CD4-positive, alpha-beta memory T cell (primary cell): ENCODE measurements at regions of chr22 and their contacts with region 1.

Region 1: DNA sequence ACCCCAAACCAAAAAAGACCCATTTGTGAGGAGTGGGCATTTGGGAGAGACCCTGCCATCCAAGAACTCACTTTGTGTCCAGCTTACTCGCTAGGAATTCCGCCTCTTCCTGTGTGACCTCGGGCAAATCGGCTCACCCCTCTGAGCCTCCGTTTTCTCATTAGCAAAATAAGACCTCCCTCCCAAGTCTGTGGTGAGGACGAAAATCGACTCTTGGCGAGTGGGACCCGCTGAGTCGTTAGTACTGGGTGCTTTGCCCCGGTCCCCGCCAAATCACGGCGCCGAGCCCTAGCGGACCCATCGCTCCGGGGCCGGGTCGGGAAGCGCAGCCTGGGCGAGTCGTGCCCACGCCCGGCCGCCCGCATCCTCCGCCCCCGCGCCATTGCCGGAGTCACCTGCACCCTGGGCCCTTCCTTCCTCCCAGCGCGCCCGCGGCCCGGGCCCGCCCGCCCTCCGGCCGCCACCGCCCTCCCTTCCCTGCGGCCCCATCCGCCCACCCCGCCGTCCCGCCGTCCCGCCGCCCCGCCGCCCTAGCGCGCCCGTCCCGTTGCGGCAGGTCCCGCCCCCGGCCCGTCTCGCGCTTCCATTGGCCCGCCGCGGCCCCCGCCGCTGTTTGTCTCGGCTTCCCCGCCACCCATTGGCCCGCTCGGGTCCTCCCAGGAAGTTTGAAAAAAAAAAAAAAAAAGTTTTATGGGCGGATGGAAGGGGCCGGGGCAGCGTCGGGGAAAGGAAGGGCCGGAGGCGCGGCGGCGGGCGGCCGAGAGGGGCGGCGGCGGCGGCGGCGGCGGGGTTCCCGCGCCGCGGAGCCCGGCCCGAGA is 48.9 kb downstream of the TRIOBP start:
- DNase-seq: peak; percentile 79 to 86 (median 82)
- H3K4me3 ChIP-seq: peak overlapping the region; percentile 45 to 62
- H3K4me3 Mint-ChIP-seq: peak overlapping the region; percentile 86 to 97 (median 94)
- H3K27ac ChIP-seq: peak overlapping the region; percentile 60
- H3K27ac Mint-ChIP-seq: peak overlapping the region; percentile 82 to 96 (median 92)
- H3K4me1 ChIP-seq: peaks cover 22% of the 10 kb centered on the region
- H3K4me1 Mint-ChIP-seq: peaks cover 6 to 31% (median 25%) of the 10 kb centered on the region in 4 donors
- H3K27me3 ChIP-seq: no peaks in the 10 kb centered on the region
- H3K27me3 Mint-ChIP-seq: no peaks in the 10 kb centered on the region

Region 2: DNA sequence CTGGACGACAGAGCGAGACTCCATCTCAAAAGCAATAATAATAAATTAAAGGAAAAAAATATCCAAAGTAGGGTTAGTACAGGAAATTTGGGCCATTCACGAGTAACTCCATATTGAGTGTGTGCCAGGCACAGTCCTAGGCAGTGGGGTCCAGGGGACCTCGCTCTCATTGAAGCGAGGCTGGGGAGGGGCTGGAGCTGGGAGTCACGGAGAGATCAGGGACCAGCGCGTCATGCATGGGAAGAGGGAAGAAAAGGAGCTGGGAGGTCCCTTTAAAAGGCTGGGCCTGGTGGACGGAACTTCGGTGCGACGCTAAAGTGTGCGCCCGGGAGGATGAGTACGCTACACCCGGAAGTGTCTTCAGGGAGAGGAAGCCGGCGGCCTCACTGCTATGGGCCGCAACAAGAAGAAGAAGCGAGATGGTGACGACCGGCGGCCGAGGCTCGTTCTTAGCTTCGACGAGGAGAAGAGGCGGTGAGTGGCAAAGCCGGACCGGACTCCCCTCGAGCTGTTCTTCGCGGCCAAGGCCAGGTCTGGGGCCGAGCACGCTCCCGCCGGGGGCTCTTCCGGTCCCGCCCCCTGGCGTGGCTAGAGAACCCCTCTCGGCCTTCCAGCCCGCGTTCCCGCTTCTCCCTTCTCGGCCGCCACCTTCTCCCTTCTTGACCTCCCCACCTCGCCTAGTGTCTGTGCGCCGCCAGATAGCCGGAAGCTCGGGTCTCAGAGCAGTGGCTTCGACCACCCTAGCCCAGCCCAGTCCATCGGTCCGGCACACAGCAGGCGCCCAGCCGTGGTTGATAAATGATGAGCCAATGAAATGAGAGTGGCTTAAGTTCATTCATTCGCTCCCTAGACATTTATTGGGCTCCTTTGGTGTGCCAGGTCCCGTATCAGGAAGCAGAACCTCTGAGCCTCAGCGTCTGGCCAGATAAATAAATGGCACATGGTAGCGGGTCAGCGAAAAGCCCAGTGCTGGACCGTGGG is 59.5 kb before region 1 on chr22 and contains the start of gene NOL12:
- CTCF ChIA-PET with region 1: no interaction called
- POLR2A ChIA-PET with region 1: no interaction called
- intact Hi-C with region 1: loop called (anchors 10 kb)
- DNase-seq: peak; percentile 76 to 82 (median 77)
- H3K4me3 ChIP-seq: peak within 1 kb of the TSS; percentile 79 to 96
- H3K4me3 Mint-ChIP-seq: peak within 1 kb of the TSS; percentile 91 to 98 (median 96)
- H3K27ac ChIP-seq: peak within 1 kb of the TSS; percentile 92
- H3K27ac Mint-ChIP-seq: peak within 1 kb of the TSS; percentile 91 to 98 (median 95)
- H3K4me1 ChIP-seq: peaks cover 25% of the 10 kb centered on the region
- H3K4me1 Mint-ChIP-seq: peaks cover 16 to 34% (median 25%) of the 10 kb centered on the region in 4 donors
- H3K27me3 ChIP-seq: no peaks in the 10 kb centered on the region
- H3K27me3 Mint-ChIP-seq: no peaks in the 10 kb centered on the region
- total RNA-seq, gene NOL12: 50.3 to 52.0 TPM

Region 3: DNA sequence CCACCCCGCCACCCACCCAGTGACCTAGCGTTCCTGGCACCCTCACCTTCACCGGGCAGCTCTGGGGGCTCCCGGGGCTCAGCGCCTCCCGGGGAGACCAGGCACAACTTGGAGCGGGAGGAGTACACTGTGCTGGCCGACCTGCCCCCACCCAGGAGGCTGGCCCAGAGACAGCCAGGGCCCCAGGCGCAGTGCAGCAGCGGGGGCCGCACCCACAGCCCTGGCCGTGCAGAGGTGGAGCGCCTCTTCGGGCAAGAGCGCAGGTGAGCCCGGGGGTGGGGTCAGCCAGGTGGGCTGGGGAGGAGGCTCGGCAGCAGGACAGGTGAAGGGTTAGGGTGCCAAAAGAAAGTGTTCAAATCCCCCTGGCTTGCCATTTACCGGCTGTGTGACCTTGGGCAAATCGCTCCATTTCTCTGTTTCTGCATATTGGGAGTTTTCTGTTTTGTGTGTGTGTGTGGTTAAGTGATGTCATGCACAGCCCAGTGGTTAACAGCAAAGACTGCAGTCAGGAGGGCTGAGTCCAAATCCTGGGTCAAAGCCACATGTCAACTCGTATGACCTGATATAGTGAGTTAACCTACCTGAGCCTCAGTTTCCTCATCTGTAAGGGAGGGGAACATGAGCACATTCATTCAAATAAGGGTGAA is 19.4 kb before region 1 on chr22:
- CTCF ChIA-PET with region 1: no interaction called
- POLR2A ChIA-PET with region 1: no interaction called
- intact Hi-C with region 1: no loop called
- DNase-seq: no peak
- H3K4me3 ChIP-seq: no peak overlapping the region
- H3K4me3 Mint-ChIP-seq: no peak overlapping the region
- H3K27ac ChIP-seq: no peak overlapping the region
- H3K27ac Mint-ChIP-seq: no peak overlapping the region
- H3K4me1 ChIP-seq: no peaks in the 10 kb centered on the region
- H3K4me1 Mint-ChIP-seq: no peaks in the 10 kb centered on the region
- H3K27me3 ChIP-seq: no peaks in the 10 kb centered on the region
- H3K27me3 Mint-ChIP-seq: no peaks in the 10 kb centered on the region

Region 4: GRCh38 chr22:37807410-37808293 is 61.9 kb after region 1 on chr22 and contains the start of gene GCAT:
- CTCF ChIA-PET with region 1: no interaction called
- POLR2A ChIA-PET with region 1: no interaction called
- intact Hi-C with region 1: loop called (anchors 5 kb)
- DNase-seq: peak; percentile 70 to 82 (median 75)
- H3K4me3 ChIP-seq: peak within 1 kb of the TSS; percentile 36 to 45
- H3K4me3 Mint-ChIP-seq: peak within 1 kb of the TSS; percentile 69 to 87 (median 78)
- H3K27ac ChIP-seq: no peak within 1 kb of the TSS
- H3K27ac Mint-ChIP-seq: peak within 1 kb of the TSS in 4 of 7 donors; percentile 32 to 47 (median 45)
- H3K4me1 ChIP-seq: peaks cover 50% of the 10 kb centered on the region
- H3K4me1 Mint-ChIP-seq: peaks cover 17 to 50% (median 37%) of the 10 kb centered on the region in 4 donors
- H3K27me3 ChIP-seq: peaks cover 20% of the 10 kb centered on the region
- H3K27me3 Mint-ChIP-seq: peaks cover 30% of the 10 kb centered on the region in 2 donors
- total RNA-seq, gene GCAT: 3.4 to 4.4 TPM